ENCODE measurements at regions of chr17 and their contacts with region 1.

Region 1: DNA sequence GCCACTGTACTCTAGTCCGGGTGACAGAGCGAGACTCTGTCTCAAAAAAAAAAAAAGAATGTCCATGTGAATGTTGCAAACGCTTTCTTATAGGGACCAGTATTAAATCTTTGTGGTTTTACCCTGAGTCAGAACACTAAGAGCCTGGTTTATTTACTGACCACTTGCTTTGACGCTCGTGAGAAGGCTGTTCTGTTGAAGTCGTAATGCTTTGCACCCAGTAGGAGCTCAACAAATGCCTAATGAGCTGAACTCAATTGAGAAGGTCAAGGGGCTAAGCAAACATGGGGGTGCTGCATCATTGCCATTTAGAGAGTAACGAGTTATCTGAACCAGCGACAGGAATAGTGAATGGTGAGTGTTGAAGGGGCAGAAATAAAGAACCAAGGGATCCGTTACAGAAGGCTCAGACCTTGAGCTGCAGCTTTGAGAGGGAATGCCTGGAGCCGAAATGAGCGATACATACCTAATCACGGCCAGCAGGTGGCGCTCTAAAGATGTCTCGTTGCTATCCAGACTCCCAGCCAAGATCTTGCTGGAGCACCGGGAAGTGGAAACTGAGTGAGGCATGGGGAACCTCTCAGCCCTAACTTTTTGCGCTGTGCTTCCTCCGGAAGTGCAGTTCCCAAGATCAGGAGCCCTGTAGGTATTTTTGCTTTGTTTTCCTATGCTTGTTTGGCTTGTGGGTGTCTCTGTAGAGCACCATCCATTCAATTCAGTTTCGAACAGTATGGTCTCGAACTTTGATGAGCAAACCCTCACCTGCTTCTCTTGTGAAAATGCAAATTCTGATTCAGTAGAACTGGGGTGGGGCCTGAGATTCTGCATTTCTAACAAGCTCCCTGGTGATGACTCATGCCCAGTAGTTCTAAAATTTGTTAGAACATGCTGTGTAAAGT is 12.6 kb upstream of the RNF222 start:
- DNase-seq: peak; percentile 83
- ATAC-seq: peak; percentile 86
- H3K4me3 Mint-ChIP-seq: no peak overlapping the region
- H3K27ac Mint-ChIP-seq: no peak overlapping the region
- H3K4me1 Mint-ChIP-seq: peaks cover 32% of the 10 kb centered on the region
- H3K27me3 Mint-ChIP-seq: peaks cover 38% of the 10 kb centered on the region

Region 2: DNA sequence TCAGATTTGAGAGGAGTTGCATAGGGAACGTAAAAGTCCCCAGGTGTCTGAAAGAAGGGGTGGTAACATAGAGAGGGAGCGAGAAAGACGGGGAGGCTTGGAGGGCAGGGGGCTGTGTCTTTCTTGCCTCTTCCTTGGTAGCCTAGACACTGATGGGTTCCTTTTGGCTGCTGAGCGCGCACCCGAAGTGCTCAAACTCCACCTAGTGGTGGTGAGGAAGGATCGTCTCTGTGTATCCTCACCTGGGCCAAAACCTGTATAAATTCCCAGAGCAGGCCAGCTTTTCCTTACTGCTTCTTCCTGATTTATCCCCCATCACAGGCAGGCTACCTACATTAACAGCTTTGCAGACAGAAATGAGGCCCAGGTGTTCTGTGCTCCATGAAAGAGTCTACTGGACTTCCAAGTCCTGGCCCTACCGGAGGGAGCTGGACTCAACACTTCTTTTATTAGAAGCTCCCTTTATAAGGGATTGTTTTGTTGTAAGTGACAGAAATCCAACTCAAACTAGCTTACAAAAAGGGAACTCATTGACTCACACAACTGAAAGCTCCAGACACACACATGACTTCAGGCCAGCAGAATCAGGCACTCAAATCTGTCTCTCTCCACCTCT is 109.5 kb before region 1 on chr17:
- CTCF ChIA-PET with region 1: no interaction called
- DNase-seq: peak; percentile 74
- ATAC-seq: peak; percentile 92
- H3K4me3 Mint-ChIP-seq: no peak overlapping the region
- H3K27ac Mint-ChIP-seq: peak overlapping the region; percentile 58
- H3K4me1 Mint-ChIP-seq: peaks cover 11% of the 10 kb centered on the region
- H3K27me3 Mint-ChIP-seq: no peaks in the 10 kb centered on the region

Region 3: DNA sequence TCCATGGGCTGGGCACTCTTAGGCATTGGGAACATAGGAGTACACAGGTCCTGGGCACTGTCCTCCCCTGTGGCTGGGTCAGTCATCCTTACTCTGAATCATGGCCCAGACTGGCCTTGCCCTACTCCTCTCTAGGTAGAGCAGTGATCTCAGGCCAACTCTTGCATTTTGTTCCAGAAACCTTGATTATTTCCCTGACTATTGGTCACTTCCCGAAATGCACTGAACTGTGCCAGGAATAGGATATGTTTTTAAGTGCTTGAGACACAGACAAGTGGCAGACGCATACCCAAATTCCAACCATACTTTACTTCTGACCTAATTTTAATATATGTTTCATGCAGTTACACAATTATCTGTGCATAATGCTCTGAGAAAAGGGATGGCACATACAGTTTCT is 44.0 kb before region 1 on chr17:
- CTCF ChIA-PET with region 1: no interaction called
- DNase-seq: no peak
- ATAC-seq: no peak
- H3K4me3 Mint-ChIP-seq: no peak overlapping the region
- H3K27ac Mint-ChIP-seq: no peak overlapping the region
- H3K4me1 Mint-ChIP-seq: peaks cover 3% of the 10 kb centered on the region
- H3K27me3 Mint-ChIP-seq: no peaks in the 10 kb centered on the region

Region 4: DNA sequence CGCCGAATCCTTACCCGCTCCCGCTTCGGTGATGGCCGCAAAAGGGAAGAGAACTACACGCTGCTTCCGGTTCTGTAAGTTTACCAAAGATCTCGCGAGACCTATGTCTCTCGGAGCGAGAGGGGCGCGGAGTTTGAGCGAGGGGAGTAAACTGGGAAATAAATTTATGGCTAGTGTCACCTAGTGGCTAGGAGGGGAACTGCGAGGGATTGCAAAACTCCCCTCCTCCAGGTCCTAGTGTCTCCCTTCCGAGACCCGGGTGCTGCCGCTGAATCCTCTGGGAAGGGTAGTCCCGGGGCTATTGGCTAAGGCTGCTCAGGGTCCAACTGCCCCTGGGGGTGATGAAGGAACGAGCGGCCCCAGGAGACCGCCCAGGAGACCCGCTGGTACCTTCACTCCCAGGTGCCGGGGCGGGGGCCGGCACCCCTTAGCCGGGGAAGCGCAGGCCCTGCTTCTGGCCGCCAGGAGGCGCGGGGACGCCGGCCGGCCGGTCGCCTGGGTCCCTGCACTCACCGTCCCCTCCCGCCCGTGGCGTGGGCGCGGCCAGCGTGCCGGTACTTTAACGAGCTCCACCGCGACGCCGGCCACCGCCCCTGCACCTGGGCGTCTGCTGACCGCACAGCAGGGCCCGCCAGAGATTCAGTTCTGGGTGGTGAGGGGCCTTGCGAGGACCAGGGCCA is 26.9 kb before region 1 on chr17 and contains the start of gene RPL26:
- CTCF ChIA-PET with region 1: interaction called, 12 read pairs
- DNase-seq: peak; percentile 98
- ATAC-seq: peak; percentile 95
- H3K4me3 Mint-ChIP-seq: peak within 1 kb of the TSS; percentile 96
- H3K27ac Mint-ChIP-seq: peak within 1 kb of the TSS; percentile 86
- H3K4me1 Mint-ChIP-seq: peaks cover 71% of the 10 kb centered on the region
- H3K27me3 Mint-ChIP-seq: no peaks in the 10 kb centered on the region
- total RNA-seq, gene RPL26: 1,612 to 1,903 TPM

Region 5: GRCh38 chr17:8393420-8394241 is 16.6 kb before region 1 on chr17:
- CTCF ChIA-PET with region 1: interaction called, 13 read pairs
- DNase-seq: peak; percentile 80
- ATAC-seq: peak; percentile 94
- H3K4me3 Mint-ChIP-seq: no peak overlapping the region
- H3K27ac Mint-ChIP-seq: peak overlapping the region; percentile 94
- H3K4me1 Mint-ChIP-seq: peaks cover 12% of the 10 kb centered on the region
- H3K27me3 Mint-ChIP-seq: peaks cover 24% of the 10 kb centered on the region

Region 6: DNA sequence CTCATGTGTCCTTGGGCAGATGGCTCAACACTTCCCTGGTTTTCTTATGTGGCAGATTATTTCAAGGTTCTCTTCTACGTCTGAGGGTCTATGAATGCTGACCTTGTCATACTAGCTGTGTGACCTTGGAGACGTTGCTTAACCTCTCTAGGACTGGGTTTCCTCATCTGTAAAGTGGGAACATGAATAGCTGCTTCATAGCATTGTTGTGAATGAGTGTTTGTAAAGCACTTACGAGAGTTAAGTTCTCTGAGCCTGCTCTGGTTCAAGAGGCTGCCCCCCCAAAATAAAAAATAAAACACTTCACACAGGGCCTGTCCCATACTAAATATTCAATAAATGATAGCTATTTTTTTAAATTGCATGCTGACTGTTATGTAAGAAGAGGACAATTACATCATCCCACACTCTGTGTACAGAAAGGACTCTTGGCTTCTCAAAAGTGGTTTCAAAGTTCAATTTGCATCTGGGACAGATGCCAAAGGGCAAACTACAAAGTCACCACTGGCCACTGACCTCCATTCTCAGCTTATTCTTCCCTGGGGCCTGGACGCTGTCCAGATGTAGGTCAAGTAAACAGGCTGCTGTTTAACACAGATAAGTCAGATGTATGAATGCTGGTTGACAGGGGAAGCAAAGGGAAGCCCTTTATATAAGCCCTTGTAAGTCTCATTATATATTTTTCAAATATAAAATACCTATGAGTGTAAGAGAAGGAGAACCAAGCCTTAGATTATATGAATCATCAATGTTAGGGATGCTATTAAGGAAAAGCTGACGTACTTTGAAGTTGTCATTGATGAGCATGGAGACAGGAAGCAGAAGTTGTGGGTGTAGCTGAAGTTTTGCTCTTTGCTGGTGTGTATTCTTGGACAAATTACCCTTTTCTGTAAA is 10.1 kb after region 1 on chr17:
- CTCF ChIA-PET with region 1: interaction called, 16 read pairs
- DNase-seq: no peak
- ATAC-seq: no peak
- H3K4me3 Mint-ChIP-seq: no peak overlapping the region
- H3K27ac Mint-ChIP-seq: no peak overlapping the region
- H3K4me1 Mint-ChIP-seq: no peaks in the 10 kb centered on the region
- H3K27me3 Mint-ChIP-seq: peaks cover 76% of the 10 kb centered on the region

Region 7: GRCh38 chr17:8435245-8436168 is 25.3 kb after region 1 on chr17 and contains the start of gene NDEL1:
- CTCF ChIA-PET with region 1: interaction called, 21 read pairs
- DNase-seq: peak; percentile 99
- ATAC-seq: peak; percentile 98
- H3K4me3 Mint-ChIP-seq: peak within 1 kb of the TSS; percentile 98
- H3K27ac Mint-ChIP-seq: peak within 1 kb of the TSS; percentile 97
- H3K4me1 Mint-ChIP-seq: peaks cover 24% of the 10 kb centered on the region
- H3K27me3 Mint-ChIP-seq: no peaks in the 10 kb centered on the region
- total RNA-seq, gene NDEL1: 58.8 to 59.0 TPM

Region 8: GRCh38 chr17:8745586-8746500 is 335.6 kb after region 1 on chr17:
- CTCF ChIA-PET with region 1: interaction called, 24 read pairs
- DNase-seq: peak; percentile 83
- ATAC-seq: peak; percentile 82
- H3K4me3 Mint-ChIP-seq: peak overlapping the region; percentile 84
- H3K27ac Mint-ChIP-seq: peak overlapping the region; percentile 92
- H3K4me1 Mint-ChIP-seq: peaks cover 11% of the 10 kb centered on the region
- H3K27me3 Mint-ChIP-seq: peaks cover 10% of the 10 kb centered on the region

Measured in activated CD8-positive, alpha-beta memory T cell treated with anti-CD3 and anti-CD28 coated beads, Interleukin-2, amount 10 ng/mL, durations not matched to agents 7 days and 5 days (primary cell).